ENCODE measurements at regions of chr1 and their contacts with region 1.

Region 1: GRCh38 chr1:32063261-32063681 is 9.5 kb upstream of the TMEM39B start:
- DNase-seq: peak in 1 of 2 donors; percentile 81
- H3K4me3 ChIP-seq: no peak overlapping the region
- H3K27ac ChIP-seq: peak overlapping the region in 4 of 5 donors; percentile 12 to 61 (median 35)
- H3K4me1 ChIP-seq: peaks cover 11 to 38% (median 27%) of the 10 kb centered on the region in 4 donors
- H3K27me3 ChIP-seq: no peaks in the 10 kb centered on the region
- CTCF ChIP-seq: peak in 5 of 7 experiments; percentile 43 to 66 (median 54)
- EP300 ChIP-seq: no peak
- POLR2A ChIP-seq: no peak

Region 2: DNA sequence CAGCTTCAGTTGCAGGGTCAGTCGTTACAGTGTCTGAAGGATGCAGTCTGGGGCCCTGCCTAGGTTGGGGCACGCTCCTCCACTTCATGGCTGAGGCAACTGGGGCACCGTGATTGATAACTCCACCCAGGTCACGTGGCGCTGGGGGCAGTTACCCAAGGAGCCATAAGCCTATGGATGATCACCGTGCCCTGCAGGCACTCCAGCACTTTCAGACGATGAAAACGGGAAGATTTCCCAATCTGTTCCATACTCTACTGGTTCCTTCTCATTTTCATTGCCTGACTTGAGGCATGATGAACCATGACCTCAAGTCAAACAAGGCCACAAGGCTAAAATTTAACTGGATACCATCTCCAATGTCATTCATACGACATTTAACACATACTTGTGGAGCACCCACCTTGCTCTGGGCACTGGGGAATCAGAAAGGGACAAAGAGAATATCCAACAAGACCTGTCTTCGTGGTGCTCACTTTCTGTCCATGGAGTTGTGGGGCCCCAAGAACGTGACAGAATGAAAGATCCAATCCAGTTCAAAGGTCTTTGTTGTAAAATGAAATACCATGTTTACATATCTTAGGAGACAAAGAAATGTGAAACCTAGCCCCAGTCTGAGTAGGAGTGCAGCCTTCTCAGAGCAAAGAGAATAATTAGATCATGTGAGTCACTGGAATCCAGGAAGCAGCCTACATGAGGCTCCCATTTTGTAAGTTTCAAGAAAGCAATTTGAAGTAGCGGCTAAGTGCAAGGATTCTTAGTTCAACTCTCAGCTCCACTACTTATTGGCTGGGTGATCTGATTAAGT is 208.0 kb before region 1 on chr1:
- intact Hi-C with region 1: no loop called
- DNase-seq: peak in 1 of 2 donors; percentile 62
- H3K4me3 ChIP-seq: no peak overlapping the region
- H3K27ac ChIP-seq: no peak overlapping the region
- H3K4me1 ChIP-seq: no peaks in the 10 kb centered on the region
- H3K27me3 ChIP-seq: no peaks in the 10 kb centered on the region
- CTCF ChIP-seq: no peak
- EP300 ChIP-seq: no peak
- POLR2A ChIP-seq: no peak

Region 3: GRCh38 chr1:31872658-31873636 is 190.3 kb before region 1 on chr1:
- intact Hi-C with region 1: no loop called
- DNase-seq: no peak
- H3K4me3 ChIP-seq: no peak overlapping the region
- H3K27ac ChIP-seq: no peak overlapping the region
- H3K4me1 ChIP-seq: peaks cover 0 to 13% (median 5%) of the 10 kb centered on the region in 4 donors
- H3K27me3 ChIP-seq: no peaks in the 10 kb centered on the region
- CTCF ChIP-seq: no peak
- EP300 ChIP-seq: no peak
- POLR2A ChIP-seq: no peak

Region 4: GRCh38 chr1:32013386-32014198 is 49.7 kb before region 1 on chr1 and contains the start of gene KHDRBS1:
- intact Hi-C with region 1: loop called (anchors 10 kb)
- DNase-seq: peak; percentile 99 to 100
- H3K4me3 ChIP-seq: peak within 1 kb of the TSS; percentile 79 to 100 (median 91)
- H3K27ac ChIP-seq: peak within 1 kb of the TSS; percentile 97 to 100 (median 99)
- H3K4me1 ChIP-seq: peaks cover 20 to 45% (median 40%) of the 10 kb centered on the region in 4 donors
- H3K27me3 ChIP-seq: no peaks in the 10 kb centered on the region
- CTCF ChIP-seq: peak in 1 of 7 experiments; percentile 12
- EP300 ChIP-seq: no peak
- POLR2A ChIP-seq: peak in 1 of 4 donors; percentile 28
- total RNA-seq, gene KHDRBS1: 21.4 to 99.9 (median 76.9) TPM